Body of pancreas (tissue), 4 donors: ENCODE measurements at regions of chr9 and their contacts with region 1.

Region 1: GRCh38 chr9:129172802-129173201 is 5.3 kb downstream of the IER5L start:
- DNase-seq: no peak
- ATAC-seq: no peak
- H3K4me3 ChIP-seq: no peak overlapping the region
- H3K27ac ChIP-seq: peak overlapping the region in 3 of 4 donors; percentile 18 to 93 (median 30)
- H3K4me1 ChIP-seq: peaks cover 46% of the 10 kb centered on the region
- H3K27me3 ChIP-seq: no peaks in the 10 kb centered on the region
- CTCF ChIP-seq: no peak
- POLR2A ChIP-seq: no peak

Region 2: DNA sequence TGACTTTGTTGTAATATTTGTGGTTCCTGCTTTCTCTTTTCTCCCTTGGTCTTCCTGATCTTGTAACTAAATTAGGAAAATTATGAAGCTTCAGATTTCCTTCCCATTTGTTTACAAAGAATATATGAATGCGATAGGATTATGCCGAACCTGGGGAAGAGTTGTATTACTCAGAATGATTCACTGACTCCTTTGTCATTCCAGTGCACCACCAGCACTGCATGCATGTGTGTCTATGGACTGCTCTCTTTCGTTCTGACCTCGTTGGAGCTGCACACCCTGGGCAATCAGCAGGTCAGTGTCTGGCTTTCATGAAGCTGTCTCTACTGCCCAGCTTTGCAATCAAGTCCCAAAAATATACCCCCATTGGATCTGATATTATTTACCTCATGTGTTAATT is 199.8 kb before region 1 on chr9:
- intact Hi-C with region 1: no loop called
- DNase-seq: no peak
- ATAC-seq: no peak
- H3K4me3 ChIP-seq: no peak overlapping the region
- H3K27ac ChIP-seq: no peak overlapping the region
- H3K4me1 ChIP-seq: no peaks in the 10 kb centered on the region
- H3K27me3 ChIP-seq: no peaks in the 10 kb centered on the region
- CTCF ChIP-seq: no peak
- POLR2A ChIP-seq: no peak

Region 3: DNA sequence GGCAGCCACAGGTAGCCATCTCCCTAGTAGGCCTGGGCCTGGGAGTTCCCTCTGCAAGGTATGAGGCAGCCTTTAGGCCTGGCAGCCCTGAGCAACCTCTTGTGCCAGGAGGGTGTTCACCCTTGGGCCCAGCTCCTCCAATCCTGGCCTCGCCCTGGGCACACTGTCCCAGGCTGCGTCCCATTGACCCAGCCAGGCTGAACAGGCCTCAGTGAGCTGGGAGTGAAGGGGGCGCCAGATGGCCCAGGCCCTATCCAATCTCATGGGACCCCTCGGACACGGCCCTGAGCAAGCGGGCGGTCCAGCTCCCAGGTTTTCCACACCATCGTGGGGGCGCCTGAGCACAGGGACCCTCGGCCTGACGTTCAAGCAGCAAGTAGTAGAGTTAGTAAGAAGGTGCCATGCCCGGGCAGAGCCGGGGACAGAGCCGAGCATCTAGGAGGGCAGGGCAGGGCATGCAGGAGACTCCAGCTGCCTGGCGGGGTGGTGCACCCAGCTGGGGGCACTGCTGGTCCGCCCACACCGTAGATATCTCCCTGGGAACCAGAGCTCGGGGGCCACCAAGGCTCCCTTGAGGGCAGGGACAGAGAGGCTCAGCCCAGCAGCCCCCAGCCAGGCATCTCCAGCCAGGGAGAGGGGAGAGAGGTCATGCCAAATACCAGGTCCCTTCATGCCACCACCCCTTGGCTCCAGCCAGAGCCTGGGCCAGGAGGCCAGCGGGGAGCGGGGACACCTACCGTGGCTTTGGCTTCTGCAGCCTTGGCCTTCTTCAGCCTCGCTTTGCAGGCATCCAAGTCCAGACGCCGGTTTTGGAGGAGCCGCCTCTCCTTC is 158.9 kb before region 1 on chr9:
- intact Hi-C with region 1: no loop called
- DNase-seq: no peak
- ATAC-seq: no peak
- H3K4me3 ChIP-seq: no peak overlapping the region
- H3K27ac ChIP-seq: no peak overlapping the region
- H3K4me1 ChIP-seq: no peaks in the 10 kb centered on the region
- H3K27me3 ChIP-seq: no peaks in the 10 kb centered on the region
- CTCF ChIP-seq: no peak
- POLR2A ChIP-seq: no peak

Region 4: GRCh38 chr9:129139993-129140396 is 32.8 kb before region 1 on chr9:
- intact Hi-C with region 1: loop called (anchors 2 kb)
- DNase-seq: peak; percentile 84 to 96 (median 92)
- ATAC-seq: peak; percentile 82
- H3K4me3 ChIP-seq: no peak overlapping the region
- H3K27ac ChIP-seq: peak overlapping the region; percentile 97 to 100 (median 100)
- H3K4me1 ChIP-seq: peaks cover 61% of the 10 kb centered on the region
- H3K27me3 ChIP-seq: no peaks in the 10 kb centered on the region
- CTCF ChIP-seq: peak in 1 of 7 experiments; percentile 0
- POLR2A ChIP-seq: peak; percentile 31 to 87 (median 80)

Region 5: DNA sequence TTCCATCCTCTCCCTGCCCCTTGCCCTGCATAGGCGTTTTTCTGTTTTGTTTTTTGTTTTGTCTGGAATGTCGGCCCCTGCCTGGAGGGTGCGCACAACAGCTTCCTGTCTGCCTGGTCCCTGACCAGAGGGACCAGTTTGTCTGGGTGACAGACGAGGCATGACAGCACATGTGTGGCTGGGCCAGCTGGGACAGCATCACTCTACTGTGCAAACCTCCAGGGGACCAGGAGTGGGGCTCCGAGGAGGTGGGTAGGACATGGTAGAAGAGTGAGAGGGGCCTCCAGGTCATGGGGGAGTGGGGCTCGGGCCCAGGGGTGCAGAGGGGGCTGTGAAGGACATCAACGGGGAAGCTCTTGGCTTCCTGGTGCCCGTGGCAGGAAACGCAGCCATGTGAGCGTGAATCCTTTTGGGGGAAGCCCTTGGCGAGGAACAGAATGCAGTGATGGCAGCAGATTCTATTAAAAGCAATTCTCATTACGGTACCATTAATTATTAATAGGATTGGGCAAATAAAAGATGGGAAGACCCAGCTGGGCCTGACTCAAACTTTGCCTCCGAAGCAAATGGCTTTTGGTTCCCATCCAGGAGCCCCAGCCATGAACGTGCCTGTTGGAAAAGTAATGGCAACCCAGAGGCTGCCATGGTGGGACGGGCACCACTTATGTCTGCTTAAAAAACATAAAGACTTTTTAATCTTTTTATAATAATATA is 189.6 kb after region 1 on chr9:
- intact Hi-C with region 1: no loop called
- DNase-seq: peak in 2 of 4 donors; percentile 50 to 52
- ATAC-seq: peak; percentile 62
- H3K4me3 ChIP-seq: no peak overlapping the region
- H3K27ac ChIP-seq: peak overlapping the region in 3 of 4 donors; percentile 10 to 62 (median 48)
- H3K4me1 ChIP-seq: peaks cover 7% of the 10 kb centered on the region
- H3K27me3 ChIP-seq: no peaks in the 10 kb centered on the region
- CTCF ChIP-seq: peak in 1 of 7 experiments; percentile 30
- POLR2A ChIP-seq: no peak